ENCODE measurements at regions of chr6 and their contacts with region 1.

Region 1: DNA sequence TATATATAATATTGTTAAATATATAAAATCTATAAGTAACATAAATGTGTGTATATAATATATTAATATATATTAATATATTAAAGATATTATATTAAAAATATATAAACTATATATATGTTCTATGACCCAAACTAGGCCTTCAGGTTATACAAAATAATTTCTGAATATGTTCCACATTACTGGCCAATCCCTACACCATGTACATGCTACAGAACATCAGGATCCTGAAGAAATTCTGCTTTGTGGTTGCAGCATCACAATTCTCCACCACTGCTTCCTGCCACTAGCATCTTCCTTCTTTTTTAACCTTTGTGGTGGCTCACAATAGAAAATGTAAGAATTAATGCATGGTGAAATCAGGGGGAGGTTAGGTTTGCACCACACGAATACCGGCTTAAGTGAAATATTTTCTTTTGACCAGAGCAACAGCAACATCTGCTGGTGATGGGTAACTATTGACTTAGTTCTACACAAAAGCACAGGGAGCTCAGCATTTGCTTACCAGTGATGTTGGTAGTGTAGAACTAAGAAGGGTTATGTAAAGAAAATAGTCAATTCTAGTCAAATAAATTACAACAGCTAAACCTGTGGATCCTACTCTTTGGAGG is 280.6 kb downstream of the SYNE1 start:
- DNase-seq: peak in 1 of 2 experiments; percentile 55
- H3K4me3 ChIP-seq: no peak overlapping the region
- H3K4me3 Mint-ChIP-seq: no peak overlapping the region
- H3K27ac Mint-ChIP-seq: no peak overlapping the region
- H3K4me1 ChIP-seq: peaks cover 4% of the 10 kb centered on the region; the same call in 1 of the 2 replicates
- H3K4me1 Mint-ChIP-seq: peaks cover 7% of the 10 kb centered on the region
- H3K27me3 ChIP-seq: no peaks in the 10 kb centered on the region
- H3K27me3 Mint-ChIP-seq: no peaks in the 10 kb centered on the region
- CTCF ChIP-seq: peak; percentile 54 to 57

Region 2: GRCh38 chr6:151675746-151676416 is 680.7 kb before region 1 on chr6:
- CTCF ChIA-PET with region 1: no interaction called
- POLR2A ChIA-PET with region 1: no interaction called
- intact Hi-C with region 1: loop called (anchors 1 kb)
- DNase-seq: peak; percentile 56 to 69
- H3K4me3 ChIP-seq: no peak overlapping the region
- H3K4me3 Mint-ChIP-seq: no peak overlapping the region
- H3K27ac Mint-ChIP-seq: peak overlapping the region; percentile 5
- H3K4me1 ChIP-seq: no peaks in the 10 kb centered on the region; the same call in 1 of the 2 replicates
- H3K4me1 Mint-ChIP-seq: peaks cover 14% of the 10 kb centered on the region
- H3K27me3 ChIP-seq: no peaks in the 10 kb centered on the region
- H3K27me3 Mint-ChIP-seq: no peaks in the 10 kb centered on the region
- CTCF ChIP-seq: peak; percentile 85 to 91

Region 3: GRCh38 chr6:151765444-151765886 is 591.1 kb before region 1 on chr6:
- CTCF ChIA-PET with region 1: interaction called, 5 read pairs
- POLR2A ChIA-PET with region 1: no interaction called
- intact Hi-C with region 1: loop called (anchors 1 kb)
- DNase-seq: peak; percentile 48 to 66
- H3K4me3 ChIP-seq: no peak overlapping the region
- H3K4me3 Mint-ChIP-seq: no peak overlapping the region
- H3K27ac Mint-ChIP-seq: no peak overlapping the region
- H3K4me1 ChIP-seq: peaks cover 3% of the 10 kb centered on the region; the same call in 1 of the 2 replicates
- H3K4me1 Mint-ChIP-seq: peaks cover 13% of the 10 kb centered on the region
- H3K27me3 ChIP-seq: no peaks in the 10 kb centered on the region
- H3K27me3 Mint-ChIP-seq: peaks cover 8% of the 10 kb centered on the region
- CTCF ChIP-seq: peak; percentile 61 to 69

Region 4: GRCh38 chr6:152136453-152136825 is 220.1 kb before region 1 on chr6:
- CTCF ChIA-PET with region 1: no interaction called
- POLR2A ChIA-PET with region 1: no interaction called
- intact Hi-C with region 1: loop called (anchors 5 kb)
- DNase-seq: no peak
- H3K4me3 ChIP-seq: no peak overlapping the region
- H3K4me3 Mint-ChIP-seq: peak overlapping the region; percentile 3
- H3K27ac Mint-ChIP-seq: peak overlapping the region; percentile 20
- H3K4me1 ChIP-seq: peaks cover 15% of the 10 kb centered on the region
- H3K4me1 Mint-ChIP-seq: peaks cover 20% of the 10 kb centered on the region
- H3K27me3 ChIP-seq: no peaks in the 10 kb centered on the region
- H3K27me3 Mint-ChIP-seq: no peaks in the 10 kb centered on the region
- CTCF ChIP-seq: no peak

Region 5: DNA sequence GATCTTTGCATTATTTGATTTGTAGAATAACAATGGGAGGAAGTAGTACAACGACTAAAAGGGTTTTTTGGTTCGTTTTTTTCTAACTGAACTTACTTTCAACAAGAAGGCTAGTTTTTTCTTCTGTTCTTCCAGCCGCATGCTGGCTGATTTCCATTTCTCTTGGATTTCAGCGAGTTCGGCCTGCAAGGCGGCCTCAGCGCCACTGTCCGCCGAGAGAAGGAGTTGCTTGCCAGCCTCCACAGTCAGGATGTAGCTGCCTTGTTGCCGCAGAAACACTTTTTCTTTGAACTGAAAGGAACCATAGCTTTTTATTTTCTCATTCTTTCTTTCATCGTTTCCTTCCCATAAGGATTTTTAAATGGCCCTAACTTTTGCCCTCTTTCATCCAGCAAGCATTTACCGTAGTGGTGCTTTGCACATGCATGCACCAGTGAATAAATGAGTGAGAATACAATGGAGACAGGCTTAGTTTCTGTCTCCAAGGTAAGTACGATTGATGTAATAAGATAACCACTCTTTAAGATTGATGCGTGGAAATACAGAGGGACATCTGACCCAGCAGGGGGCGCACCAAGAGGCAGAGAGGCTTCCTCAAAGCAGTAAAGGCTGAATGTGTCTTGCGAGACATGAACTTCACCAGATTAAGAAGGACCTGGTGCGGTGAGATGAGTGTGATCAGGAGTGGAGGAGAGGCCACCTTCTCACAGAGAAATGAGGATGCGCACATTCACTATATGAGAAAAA is 150.3 kb before region 1 on chr6:
- CTCF ChIA-PET with region 1: no interaction called
- POLR2A ChIA-PET with region 1: no interaction called
- intact Hi-C with region 1: loop called (anchors 1 kb)
- DNase-seq: peak in 1 of 2 experiments; percentile 32
- H3K4me3 ChIP-seq: no peak overlapping the region
- H3K4me3 Mint-ChIP-seq: no peak overlapping the region
- H3K27ac Mint-ChIP-seq: no peak overlapping the region
- H3K4me1 ChIP-seq: no peaks in the 10 kb centered on the region; the same call in 1 of the 2 replicates
- H3K4me1 Mint-ChIP-seq: peaks cover 6% of the 10 kb centered on the region
- H3K27me3 ChIP-seq: no peaks in the 10 kb centered on the region
- H3K27me3 Mint-ChIP-seq: no peaks in the 10 kb centered on the region
- CTCF ChIP-seq: peak; percentile 32 to 38

Region 6: DNA sequence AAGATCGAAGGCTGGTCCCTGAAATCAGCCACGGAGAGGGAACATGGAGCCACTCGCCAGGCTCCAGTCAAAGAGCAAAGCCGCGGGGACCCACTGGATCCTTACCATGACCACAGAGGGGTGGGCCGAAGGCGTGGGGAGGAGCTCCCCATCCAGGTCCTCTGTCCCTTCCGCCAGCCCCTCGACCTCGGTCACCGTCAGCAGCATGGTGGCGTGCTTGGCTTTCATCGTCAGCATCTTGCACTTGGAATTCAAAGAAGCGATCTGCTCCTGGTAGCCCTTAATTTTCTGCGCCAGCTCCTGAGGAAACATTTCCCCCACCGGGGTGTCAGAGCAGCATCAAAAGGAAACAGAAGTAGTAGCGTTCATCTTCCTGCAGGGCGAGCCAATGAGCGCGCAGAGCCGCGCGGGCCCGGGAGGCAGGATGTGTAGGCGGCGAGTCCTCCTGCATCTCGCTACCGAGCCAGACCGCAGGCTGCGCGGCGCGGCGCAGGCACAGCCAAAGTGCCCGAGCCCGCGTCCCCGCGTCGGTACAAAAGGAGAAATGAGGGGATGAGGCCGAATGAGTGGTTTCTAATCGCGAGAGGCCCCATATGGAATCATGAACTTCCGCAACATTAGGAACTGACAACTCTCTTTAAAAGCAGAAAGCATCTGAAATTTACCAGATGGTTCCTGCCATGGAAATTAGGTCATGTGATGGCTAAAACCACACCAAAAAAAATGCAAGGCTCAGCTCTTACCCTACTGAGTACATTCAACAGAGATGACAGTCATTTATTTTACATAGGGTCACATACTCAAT is 54.6 kb before region 1 on chr6:
- CTCF ChIA-PET with region 1: interaction called, 31 read pairs
- POLR2A ChIA-PET with region 1: no interaction called
- intact Hi-C with region 1: loop called (anchors 1 kb)
- DNase-seq: peak; percentile 89 to 93
- H3K4me3 ChIP-seq: peak overlapping the region; percentile 76
- H3K4me3 Mint-ChIP-seq: peak overlapping the region; percentile 99
- H3K27ac Mint-ChIP-seq: peak overlapping the region; percentile 95
- H3K4me1 ChIP-seq: peaks cover 4% of the 10 kb centered on the region; the same call in 1 of the 2 replicates
- H3K4me1 Mint-ChIP-seq: peaks cover 13% of the 10 kb centered on the region
- H3K27me3 ChIP-seq: no peaks in the 10 kb centered on the region
- H3K27me3 Mint-ChIP-seq: no peaks in the 10 kb centered on the region
- CTCF ChIP-seq: peak; percentile 59 to 71

Region 7: GRCh38 chr6:152309648-152310047 is 46.9 kb before region 1 on chr6:
- CTCF ChIA-PET with region 1: no interaction called
- POLR2A ChIA-PET with region 1: no interaction called
- intact Hi-C with region 1: loop called (anchors 1 kb)
- DNase-seq: no peak
- H3K4me3 ChIP-seq: no peak overlapping the region
- H3K4me3 Mint-ChIP-seq: no peak overlapping the region
- H3K27ac Mint-ChIP-seq: no peak overlapping the region
- H3K4me1 ChIP-seq: peaks cover 16% of the 10 kb centered on the region
- H3K4me1 Mint-ChIP-seq: peaks cover 18% of the 10 kb centered on the region
- H3K27me3 ChIP-seq: no peaks in the 10 kb centered on the region
- H3K27me3 Mint-ChIP-seq: no peaks in the 10 kb centered on the region
- CTCF ChIP-seq: no peak

Region 8: DNA sequence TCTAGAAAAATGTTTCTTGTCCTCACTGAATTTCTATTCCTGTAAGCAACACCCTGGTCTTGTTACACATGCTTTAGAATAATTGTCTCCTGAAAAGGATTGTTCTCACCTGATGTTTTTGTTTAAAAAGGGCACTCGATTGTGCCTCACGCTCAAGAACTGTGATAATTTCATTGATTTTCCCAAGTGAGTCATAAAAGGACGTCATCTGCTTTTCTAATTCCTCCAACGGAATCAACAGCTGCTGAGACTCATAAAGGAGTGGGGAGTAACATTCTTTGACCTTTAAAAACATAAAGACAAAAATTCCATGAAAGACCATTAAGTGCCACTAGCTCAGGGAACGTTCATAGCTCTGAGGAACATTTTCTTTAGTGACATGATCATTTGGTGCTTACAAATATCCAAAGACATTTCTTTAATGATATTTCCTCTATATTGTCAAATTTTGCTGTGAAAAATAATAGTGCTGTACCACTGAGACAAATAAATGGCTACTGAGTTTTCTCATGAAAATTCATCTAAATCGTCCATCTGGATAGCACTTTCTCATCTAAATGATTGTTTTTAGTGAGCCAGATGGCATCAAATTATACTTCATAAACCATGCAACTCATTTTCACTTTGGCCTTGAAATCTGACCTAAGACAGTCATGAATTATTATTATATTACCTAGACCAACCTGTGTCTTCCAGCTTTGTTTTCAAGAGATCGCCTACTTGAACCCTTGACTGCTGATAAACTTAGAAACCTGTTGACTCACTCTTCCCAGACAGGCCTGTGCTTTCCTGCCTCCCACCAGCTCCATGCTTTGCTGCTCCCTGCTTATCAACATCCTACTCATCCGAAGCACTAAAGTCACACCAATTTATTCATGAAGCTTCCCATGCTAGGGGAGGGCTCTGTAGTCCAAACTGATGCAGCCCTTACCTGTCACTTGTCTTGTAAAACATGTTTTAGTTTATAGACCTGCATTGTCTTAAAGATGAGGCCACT is 102.4 kb after region 1 on chr6:
- CTCF ChIA-PET with region 1: no interaction called
- POLR2A ChIA-PET with region 1: no interaction called
- intact Hi-C with region 1: no loop called
- DNase-seq: no peak
- H3K4me3 ChIP-seq: no peak overlapping the region
- H3K4me3 Mint-ChIP-seq: no peak overlapping the region
- H3K27ac Mint-ChIP-seq: no peak overlapping the region
- H3K4me1 ChIP-seq: no peaks in the 10 kb centered on the region
- H3K4me1 Mint-ChIP-seq: no peaks in the 10 kb centered on the region
- H3K27me3 ChIP-seq: no peaks in the 10 kb centered on the region
- H3K27me3 Mint-ChIP-seq: peaks cover 6% of the 10 kb centered on the region
- CTCF ChIP-seq: no peak